ENCODE measurements at regions of chr6 and their contacts with region 1.

Region 1: GRCh38 chr6:111483736-111484632 is 966 bp upstream of the REV3L start:
- DNase-seq: peak; percentile 92
- ATAC-seq: peak; percentile 52
- H3K4me3 Mint-ChIP-seq: peak overlapping the region; percentile 94
- H3K27ac Mint-ChIP-seq: peak overlapping the region; percentile 100
- H3K4me1 Mint-ChIP-seq: peaks cover 60% of the 10 kb centered on the region
- H3K27me3 Mint-ChIP-seq: no peaks in the 10 kb centered on the region

Region 2: GRCh38 chr6:110873981-110874879 is 609.8 kb before region 1 on chr6 and contains the start of gene AMD1:
- CTCF ChIA-PET with region 1: no interaction called
- POLR2A ChIA-PET with region 1: no interaction called
- intact Hi-C with region 1: loop called (anchors 1 to 10 kb)
- DNase-seq: peak; percentile 97
- ATAC-seq: peak; percentile 79
- H3K4me3 Mint-ChIP-seq: peak within 1 kb of the TSS; percentile 93
- H3K27ac Mint-ChIP-seq: peak within 1 kb of the TSS; percentile 98
- H3K4me1 Mint-ChIP-seq: peaks cover 25% of the 10 kb centered on the region
- H3K27me3 Mint-ChIP-seq: no peaks in the 10 kb centered on the region
- total RNA-seq, gene AMD1: 90.5 to 127 TPM

Region 3: DNA sequence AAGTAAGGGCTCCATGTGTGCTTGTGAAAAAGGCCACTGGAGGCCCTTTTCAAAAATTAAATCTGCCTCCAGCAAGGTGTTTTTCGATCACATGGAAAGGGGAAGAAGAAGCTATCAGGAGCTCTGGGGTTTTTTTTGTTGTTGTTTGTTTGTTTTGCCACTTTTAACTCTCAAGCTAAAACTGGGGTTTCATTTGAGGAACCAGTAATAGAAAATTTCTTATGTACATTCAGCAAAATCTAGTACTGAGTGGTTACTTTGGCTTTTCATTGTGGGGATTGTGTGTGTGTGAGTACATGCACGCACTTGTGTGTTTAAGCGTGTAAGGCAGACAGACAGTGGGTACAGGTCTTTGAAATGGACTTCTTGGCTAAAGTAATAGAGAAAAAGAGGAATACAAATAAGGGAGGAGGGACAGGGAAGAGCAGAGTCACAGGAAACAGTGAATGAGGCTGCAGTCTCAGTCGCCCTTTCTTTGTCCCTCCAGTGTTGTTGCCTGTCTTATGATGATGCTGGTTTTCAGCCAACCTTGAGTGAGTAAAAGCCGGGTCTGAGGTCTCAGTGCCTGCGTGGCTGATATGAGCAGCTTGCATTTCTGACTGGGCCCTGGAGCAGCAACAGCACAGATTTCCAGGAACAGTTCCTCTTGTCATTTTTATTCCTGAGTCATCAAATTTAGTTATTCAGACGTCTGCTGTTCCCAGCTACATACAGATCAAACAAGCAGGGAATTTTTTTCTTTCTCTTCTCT is 370.5 kb before region 1 on chr6:
- CTCF ChIA-PET with region 1: no interaction called
- POLR2A ChIA-PET with region 1: no interaction called
- intact Hi-C with region 1: loop called in 1 of 2 experiments (anchors 10 kb)
- DNase-seq: peak; percentile 77
- ATAC-seq: peak; percentile 96
- H3K4me3 Mint-ChIP-seq: peak overlapping the region; percentile 52
- H3K27ac Mint-ChIP-seq: peak overlapping the region; percentile 91
- H3K4me1 Mint-ChIP-seq: peaks cover 36% of the 10 kb centered on the region
- H3K27me3 Mint-ChIP-seq: no peaks in the 10 kb centered on the region

Region 4: GRCh38 chr6:111472933-111473435 is 11.0 kb before region 1 on chr6:
- CTCF ChIA-PET with region 1: no interaction called
- POLR2A ChIA-PET with region 1: no interaction called
- intact Hi-C with region 1: loop called in 1 of 2 experiments (anchors 1 kb)
- DNase-seq: no peak
- ATAC-seq: no peak
- H3K4me3 Mint-ChIP-seq: no peak overlapping the region
- H3K27ac Mint-ChIP-seq: no peak overlapping the region
- H3K4me1 Mint-ChIP-seq: peaks cover 51% of the 10 kb centered on the region
- H3K27me3 Mint-ChIP-seq: no peaks in the 10 kb centered on the region

Region 5: DNA sequence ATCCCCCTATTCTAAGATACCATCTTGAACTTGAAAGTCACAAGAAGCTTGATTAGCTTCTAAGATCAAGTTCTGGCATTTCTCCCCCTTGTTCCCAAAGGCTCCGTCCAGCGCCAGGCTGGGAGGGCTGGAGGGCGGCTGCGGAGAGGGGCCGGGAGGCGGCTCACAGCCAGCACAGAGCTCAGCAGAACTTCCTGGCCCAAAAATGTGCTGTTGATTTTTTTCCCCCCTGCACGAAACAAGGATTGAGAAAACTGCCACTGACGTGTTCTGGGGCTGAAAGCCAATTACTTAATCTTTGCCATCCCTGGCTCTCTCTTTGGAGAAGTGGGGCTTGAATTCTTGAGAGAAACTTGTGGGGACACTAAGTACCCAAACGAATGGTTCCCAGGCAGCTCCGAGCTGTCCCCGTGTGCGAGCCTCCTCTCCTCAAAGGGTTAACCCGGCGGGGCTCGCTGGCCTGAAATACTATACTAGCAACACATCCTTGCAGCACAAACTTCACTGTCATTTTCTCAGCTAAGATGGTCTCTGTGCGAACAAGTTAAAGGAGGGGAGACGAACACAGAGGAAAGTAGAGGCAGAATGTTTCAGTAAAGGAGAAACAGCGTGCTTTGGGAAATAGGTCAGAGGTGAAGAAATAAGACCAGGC is 121.2 kb after region 1 on chr6:
- CTCF ChIA-PET with region 1: interaction called, 4 read pairs
- POLR2A ChIA-PET with region 1: interaction called, 16 read pairs
- intact Hi-C with region 1: loop called (anchors 1 kb)
- DNase-seq: peak; percentile 52
- ATAC-seq: peak; percentile 45
- H3K4me3 Mint-ChIP-seq: peak overlapping the region; percentile 80
- H3K27ac Mint-ChIP-seq: peak overlapping the region; percentile 99
- H3K4me1 Mint-ChIP-seq: peaks cover 39% of the 10 kb centered on the region
- H3K27me3 Mint-ChIP-seq: no peaks in the 10 kb centered on the region

Region 6: DNA sequence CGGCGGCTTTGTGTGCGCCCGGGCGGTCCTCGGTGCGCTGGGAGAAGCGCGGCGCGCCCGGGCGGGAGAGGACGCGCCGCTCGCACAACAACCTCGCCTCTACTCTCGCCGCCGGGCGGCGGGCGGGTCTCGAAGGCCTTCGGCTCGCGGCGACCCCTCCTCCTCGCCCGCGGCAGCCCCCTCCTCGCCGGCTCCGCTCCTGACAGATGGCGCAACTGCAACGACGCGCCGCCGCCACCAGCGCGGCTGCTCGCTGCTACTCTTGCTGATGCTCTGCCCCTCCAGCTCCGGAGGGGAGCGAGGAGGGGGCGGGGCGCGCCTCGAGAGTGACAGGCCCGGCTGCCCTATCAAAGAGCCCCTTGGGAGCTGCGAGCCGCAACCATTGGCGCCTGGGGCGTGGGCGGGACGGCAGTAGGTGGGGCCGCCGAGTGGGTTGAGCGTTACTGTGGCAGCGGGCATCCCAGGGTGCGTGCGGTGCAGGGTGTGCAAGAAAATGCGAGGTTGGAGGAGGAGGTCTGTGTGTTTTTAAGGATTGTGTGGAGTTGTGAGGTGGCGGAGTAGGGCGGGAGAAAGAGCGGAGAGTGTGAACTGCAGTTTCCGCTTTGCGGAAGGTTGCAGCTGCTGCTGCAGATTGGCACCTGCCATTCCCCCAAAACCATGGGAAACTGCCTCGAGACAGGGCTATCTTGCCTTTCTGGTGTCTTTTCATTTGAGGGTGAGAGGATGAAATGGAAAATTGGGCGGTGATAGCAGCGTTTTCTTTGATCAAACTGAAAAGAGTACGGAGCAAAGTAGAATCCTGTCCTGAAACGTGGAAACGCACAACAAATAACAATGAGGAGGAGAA is 389.4 kb after region 1 on chr6 and contains the start of gene FYN:
- CTCF ChIA-PET with region 1: no interaction called
- POLR2A ChIA-PET with region 1: no interaction called
- intact Hi-C with region 1: loop called in 1 of 2 experiments (anchors 1 kb)
- DNase-seq: peak; percentile 100
- ATAC-seq: peak; percentile 87
- H3K4me3 Mint-ChIP-seq: peak within 1 kb of the TSS; percentile 98
- H3K27ac Mint-ChIP-seq: peak within 1 kb of the TSS; percentile 91
- H3K4me1 Mint-ChIP-seq: peaks cover 35% of the 10 kb centered on the region
- H3K27me3 Mint-ChIP-seq: no peaks in the 10 kb centered on the region
- total RNA-seq, gene FYN: 345 to 504 TPM

Measured in activated CD4-positive, alpha-beta T cell treated with anti-CD3 and anti-CD28 coated beads for 36 hours (primary cell).